ENCODE measurements at regions of chr3 and their contacts with region 1.

Region 1: DNA sequence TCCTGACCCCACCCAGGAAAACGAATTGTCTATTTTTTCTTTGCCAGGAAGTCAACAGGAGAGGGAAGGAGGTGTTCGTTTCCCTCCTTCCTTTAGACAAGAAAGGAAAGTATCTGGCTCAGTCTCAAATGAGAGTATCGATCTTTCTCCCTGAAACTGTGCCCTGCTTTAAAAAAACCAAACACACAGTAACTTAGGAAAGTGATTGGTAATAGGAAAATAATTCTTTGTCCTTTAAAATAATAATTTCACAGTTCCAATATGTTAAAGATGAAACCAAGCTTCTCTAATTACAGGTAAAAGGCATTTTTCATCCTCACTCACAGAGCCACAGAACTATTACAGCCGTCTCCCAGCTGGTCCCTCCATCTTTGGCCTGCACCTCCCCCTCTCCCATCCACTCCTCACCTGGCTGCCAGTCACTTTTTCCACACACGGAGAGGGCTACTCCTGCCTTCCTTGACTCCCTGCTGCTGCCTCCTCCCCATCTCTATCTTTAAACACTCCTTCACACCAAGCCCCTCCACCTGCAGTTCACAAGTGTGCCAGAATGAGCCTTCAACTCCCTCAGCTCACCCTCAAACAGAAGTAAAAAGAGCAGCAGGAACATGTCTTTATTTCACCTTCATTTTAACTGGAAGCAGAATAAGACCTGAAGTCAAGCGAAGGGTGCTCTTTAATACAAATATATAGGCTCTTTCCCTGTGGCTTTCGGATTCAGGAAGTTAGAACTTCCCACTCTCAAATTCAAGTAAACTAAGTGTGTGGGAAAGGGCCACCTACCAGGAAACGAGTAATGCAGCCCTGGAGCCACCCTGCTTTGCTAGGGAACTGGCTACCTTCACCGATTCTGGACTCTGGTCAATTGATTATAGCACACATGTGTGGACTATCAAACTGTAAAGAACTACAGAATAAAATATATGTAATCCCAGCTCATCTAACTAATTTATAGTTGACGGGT is 116.4 kb downstream of the SENP2 start:
- DNase-seq: peak; percentile 78
- H3K4me3 Mint-ChIP-seq: peak overlapping the region; percentile 67
- H3K27ac Mint-ChIP-seq: peak overlapping the region; percentile 92
- H3K4me1 Mint-ChIP-seq: peaks cover 48% of the 10 kb centered on the region
- H3K27me3 Mint-ChIP-seq: no peaks in the 10 kb centered on the region
- CTCF ChIP-seq: no peak

Region 2: GRCh38 chr3:185605566-185605965 is 97.0 kb before region 1 on chr3:
- CTCF ChIA-PET with region 1: no interaction called
- intact Hi-C with region 1: no loop called
- DNase-seq: no peak
- H3K4me3 Mint-ChIP-seq: no peak overlapping the region
- H3K27ac Mint-ChIP-seq: no peak overlapping the region
- H3K4me1 Mint-ChIP-seq: no peaks in the 10 kb centered on the region
- H3K27me3 Mint-ChIP-seq: no peaks in the 10 kb centered on the region
- CTCF ChIP-seq: no peak

Region 3: GRCh38 chr3:185687271-185687878 is 15.2 kb before region 1 on chr3:
- CTCF ChIA-PET with region 1: interaction called, 17 read pairs
- intact Hi-C with region 1: loop called (anchors 2 kb)
- DNase-seq: peak; percentile 25
- H3K4me3 Mint-ChIP-seq: no peak overlapping the region
- H3K27ac Mint-ChIP-seq: peak overlapping the region; percentile 98
- H3K4me1 Mint-ChIP-seq: peaks cover 36% of the 10 kb centered on the region
- H3K27me3 Mint-ChIP-seq: no peaks in the 10 kb centered on the region
- CTCF ChIP-seq: no peak